Panc1 (cell line): ENCODE measurements at regions of chr2 and their contacts with region 1.

Region 1: DNA sequence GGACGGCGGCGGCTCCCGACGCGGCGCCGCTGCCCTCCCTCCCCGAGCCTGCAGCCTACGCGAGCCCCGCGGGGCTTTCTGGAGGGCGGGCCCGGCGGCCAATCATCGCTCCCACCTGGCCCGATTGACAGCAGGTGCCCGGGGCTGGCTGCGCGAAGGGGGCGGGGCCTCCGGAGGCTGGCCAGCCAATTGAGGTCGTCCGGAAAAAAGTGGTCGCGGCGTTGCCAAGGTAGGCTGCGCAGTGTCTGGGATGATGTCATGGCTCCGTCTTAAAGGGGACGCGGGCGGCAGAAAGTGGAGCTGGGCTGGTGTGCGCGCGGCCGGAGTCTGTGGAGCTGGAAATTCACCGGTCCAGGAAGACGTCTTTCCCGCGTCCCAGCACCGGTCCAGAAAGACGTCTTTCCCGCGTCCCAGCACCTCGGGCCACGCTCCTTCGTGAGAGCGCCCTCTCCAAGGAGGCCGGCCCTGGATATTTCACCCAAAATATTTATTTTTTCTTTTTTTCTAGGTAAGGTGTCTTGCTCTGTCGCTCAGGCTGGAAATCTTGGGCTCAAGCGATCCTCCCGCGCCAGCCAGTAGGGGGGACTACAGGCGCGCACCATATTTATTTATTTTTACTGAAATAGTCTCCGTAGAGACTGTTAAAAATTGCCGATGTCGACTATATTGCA is at the start of gene ACTR1B:
- DNase-seq: peak; percentile 90
- ATAC-seq: peak; percentile 94
- H3K4me3 ChIP-seq: peak within 1 kb of the TSS; percentile 62 to 79
- H3K27ac ChIP-seq: peak within 1 kb of the TSS; percentile 96
- H3K4me1 ChIP-seq: peaks cover 14% of the 10 kb centered on the region
- H3K27me3 ChIP-seq: no peaks in the 10 kb centered on the region
- CTCF ChIP-seq: peak; percentile 81; the same call in 1 of the 2 replicates
- total RNA-seq, gene ACTR1B: 28.1 TPM

Region 2: GRCh38 chr2:97645695-97646629 is 18.1 kb before region 1 on chr2 and contains the start of gene COX5B:
- CTCF ChIA-PET with region 1: no interaction called
- POLR2A ChIA-PET with region 1: interaction called, 12 read pairs
- in situ Hi-C with region 1: no loop called
- intact Hi-C with region 1: no loop called
- DNase-seq: peak; percentile 80
- ATAC-seq: peak; percentile 99
- H3K4me3 ChIP-seq: peak within 1 kb of the TSS; percentile 91 to 94
- H3K27ac ChIP-seq: peak within 1 kb of the TSS; percentile 86
- H3K4me1 ChIP-seq: peaks cover 7% of the 10 kb centered on the region; the same call in 1 of the 2 replicates
- H3K27me3 ChIP-seq: no peaks in the 10 kb centered on the region
- CTCF ChIP-seq: no peak
- total RNA-seq, gene COX5B: 298 TPM

Region 3: DNA sequence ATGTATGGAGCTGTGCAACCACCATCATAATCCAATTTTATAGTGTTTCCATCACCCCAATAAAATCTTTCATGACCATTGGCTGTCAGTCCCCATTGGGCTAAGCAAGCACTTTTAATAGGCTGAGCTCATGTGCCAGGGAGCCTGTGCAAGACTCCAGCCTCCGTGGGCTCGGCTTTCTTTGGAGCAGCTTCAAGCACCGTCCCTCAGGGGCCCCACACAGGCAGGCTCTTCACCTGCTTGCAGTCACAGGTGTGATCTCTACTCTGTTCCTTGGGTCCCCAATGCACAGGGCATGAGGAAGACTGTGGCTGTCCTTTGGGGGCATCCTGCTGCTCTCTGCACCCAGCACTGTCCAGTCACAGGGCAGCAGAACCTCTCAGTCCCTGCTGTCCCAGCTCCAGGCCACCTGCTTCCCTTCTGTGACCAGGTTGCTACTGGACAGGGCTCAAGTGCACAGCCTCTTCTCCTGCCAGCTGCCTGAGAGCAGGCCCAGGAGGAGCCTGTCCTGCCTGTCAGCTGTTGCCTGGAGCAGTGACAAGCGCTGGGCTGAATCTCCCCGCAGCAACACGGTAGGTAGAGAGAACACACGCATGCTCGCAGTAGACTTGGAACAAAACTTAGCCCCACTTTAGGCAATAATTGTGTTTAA is 372.4 kb after region 1 on chr2:
- CTCF ChIA-PET with region 1: no interaction called
- POLR2A ChIA-PET with region 1: interaction called, 12 read pairs
- in situ Hi-C with region 1: no loop called
- intact Hi-C with region 1: no loop called
- DNase-seq: no peak
- ATAC-seq: no peak; the same call in 1 of the 2 replicates
- H3K4me3 ChIP-seq: no peak overlapping the region
- H3K27ac ChIP-seq: no peak overlapping the region
- H3K4me1 ChIP-seq: no peaks in the 10 kb centered on the region
- H3K27me3 ChIP-seq: no peaks in the 10 kb centered on the region
- CTCF ChIP-seq: no peak